Psoas muscle (tissue), 8 donors: ENCODE measurements at regions of chr12 and their contacts with region 1.

Region 1: DNA sequence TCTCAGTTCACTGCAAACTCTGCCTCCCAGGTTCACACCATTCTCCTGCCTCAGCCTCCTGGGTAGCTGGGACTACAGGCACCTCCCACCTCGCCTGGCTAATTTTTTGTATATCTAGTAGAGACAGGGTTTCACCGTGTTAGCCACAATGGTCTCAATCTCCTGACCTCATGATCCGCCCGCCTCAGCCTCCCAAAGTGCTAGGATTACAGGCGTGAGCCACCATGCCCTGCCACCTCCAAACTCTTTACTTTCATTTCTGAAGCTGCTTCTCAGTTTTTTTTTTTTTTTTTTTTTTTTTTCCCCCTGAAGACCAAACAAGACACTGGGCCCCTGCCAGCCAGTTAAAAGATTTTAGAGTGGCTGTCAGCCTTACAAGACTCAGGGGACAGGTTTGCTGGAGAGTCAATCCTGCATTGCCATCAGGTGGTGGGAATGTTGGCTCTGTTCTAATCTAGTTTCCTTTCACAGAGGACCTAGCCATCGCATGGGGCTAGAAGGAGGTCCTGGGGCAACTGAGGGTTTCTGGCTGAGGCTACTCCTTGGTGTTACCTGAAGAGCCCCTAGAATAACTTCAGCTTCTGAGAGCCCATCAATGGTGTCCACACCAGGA is 37.4 kb upstream of the HIGD1C start:
- DNase-seq: no peak
- ATAC-seq: no peak
- H3K4me3 ChIP-seq: no peak overlapping the region
- H3K27ac ChIP-seq: no peak overlapping the region
- H3K4me1 ChIP-seq: no peaks in the 10 kb centered on the region
- H3K27me3 ChIP-seq: no peaks in the 10 kb centered on the region
- CTCF ChIP-seq: no peak

Region 2: GRCh38 chr12:50786498-50787231 is 128.3 kb before region 1 on chr12:
- intact Hi-C with region 1: no loop called
- DNase-seq: no peak
- ATAC-seq: peak; percentile 55 to 82 (median 73)
- H3K4me3 ChIP-seq: no peak overlapping the region
- H3K27ac ChIP-seq: no peak overlapping the region
- H3K4me1 ChIP-seq: peaks cover 4% of the 10 kb centered on the region
- H3K27me3 ChIP-seq: no peaks in the 10 kb centered on the region
- CTCF ChIP-seq: no peak

Region 3: DNA sequence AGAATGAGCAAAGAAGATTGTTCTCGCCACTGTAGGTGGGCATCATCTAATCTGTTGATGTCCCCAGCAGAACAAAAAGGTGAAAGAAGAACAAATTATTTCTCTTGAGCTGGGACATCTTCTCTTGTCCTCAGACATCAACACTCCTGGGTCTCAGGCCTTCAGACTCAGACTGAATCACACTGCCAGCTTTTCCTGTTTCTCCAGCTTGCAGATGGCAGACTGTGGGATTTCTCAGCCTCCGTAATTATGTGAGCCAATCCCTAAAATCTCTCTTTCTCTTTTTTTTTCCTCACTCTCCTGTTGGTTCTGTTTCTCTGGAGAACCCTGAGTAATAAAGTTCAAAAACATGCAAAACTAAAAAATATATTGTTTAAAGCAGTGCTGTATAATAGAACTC is 75.9 kb before region 1 on chr12:
- intact Hi-C with region 1: loop called in 1 of 2 experiments (anchors 5 kb)
- DNase-seq: no peak
- ATAC-seq: no peak
- H3K4me3 ChIP-seq: no peak overlapping the region
- H3K27ac ChIP-seq: no peak overlapping the region
- H3K4me1 ChIP-seq: no peaks in the 10 kb centered on the region
- H3K27me3 ChIP-seq: no peaks in the 10 kb centered on the region
- CTCF ChIP-seq: no peak